HepG2 (cell line): ENCODE measurements at regions of chr10 and their contacts with region 1.

Region 1: GRCh38 chr10:67764012-67764822 is 68.2 kb upstream of the CTNNA3 start:
- DNase-seq: peak; percentile 85
- ATAC-seq: peak; percentile 89
- H3K4me3 ChIP-seq: peak overlapping the region; percentile 77 to 96 (median 90)
- H3K27ac ChIP-seq: peak overlapping the region; percentile 46
- H3K4me1 ChIP-seq: peaks cover 17% of the 10 kb centered on the region
- H3K27me3 ChIP-seq: peaks cover 0 to 1% of the 10 kb centered on the region in 2 experiments; a peak in 2 of 5 replicates
- CTCF ChIP-seq: no peak
- EP300 ChIP-seq: no peak
- POLR2A ChIP-seq: no peak
- RAD21 ChIP-seq: 0 out of 2 replicates have a peak, but pooled peaks have one; percentile 24

Region 2: GRCh38 chr10:67697724-67698131 is 66.5 kb before region 1 on chr10:
- CTCF ChIA-PET with region 1: no interaction called
- POLR2A ChIA-PET with region 1: no interaction called
- in situ Hi-C with region 1: no loop called
- intact Hi-C with region 1: loop called (anchors 5 kb)
- DNase-seq: peak; percentile 37
- ATAC-seq: peak; percentile 73
- H3K4me3 ChIP-seq: no peak overlapping the region
- H3K27ac ChIP-seq: no peak overlapping the region
- H3K4me1 ChIP-seq: no peaks in the 10 kb centered on the region
- H3K27me3 ChIP-seq: peaks cover 0 to 5% of the 10 kb centered on the region in 2 experiments; a peak in 3 of 5 replicates
- CTCF ChIP-seq: peak; percentile 53
- EP300 ChIP-seq: no peak
- POLR2A ChIP-seq: no peak
- RAD21 ChIP-seq: peak; percentile 24; the same call in 1 of the 2 replicates

Region 3: GRCh38 chr10:67903581-67903980 is 139.4 kb after region 1 on chr10:
- CTCF ChIA-PET with region 1: no interaction called
- POLR2A ChIA-PET with region 1: no interaction called
- in situ Hi-C with region 1: no loop called
- intact Hi-C with region 1: no loop called
- DNase-seq: no peak
- ATAC-seq: no peak
- H3K4me3 ChIP-seq: no peak overlapping the region
- H3K27ac ChIP-seq: no peak overlapping the region
- H3K4me1 ChIP-seq: no peaks in the 10 kb centered on the region
- H3K27me3 ChIP-seq: no peaks in the 10 kb centered on the region
- CTCF ChIP-seq: no peak
- EP300 ChIP-seq: no peak
- POLR2A ChIP-seq: no peak
- RAD21 ChIP-seq: no peak